Left cardiac atrium (tissue), 4 donors: ENCODE measurements at regions of chr2 and their contacts with region 1.

Region 1: GRCh38 chr2:71068218-71069035 is at the start of gene NAGK:
- DNase-seq: peak; percentile 96
- ATAC-seq: peak; percentile 96
- total RNA-seq, gene NAGK: 54.5 to 66.4 TPM

Region 2: DNA sequence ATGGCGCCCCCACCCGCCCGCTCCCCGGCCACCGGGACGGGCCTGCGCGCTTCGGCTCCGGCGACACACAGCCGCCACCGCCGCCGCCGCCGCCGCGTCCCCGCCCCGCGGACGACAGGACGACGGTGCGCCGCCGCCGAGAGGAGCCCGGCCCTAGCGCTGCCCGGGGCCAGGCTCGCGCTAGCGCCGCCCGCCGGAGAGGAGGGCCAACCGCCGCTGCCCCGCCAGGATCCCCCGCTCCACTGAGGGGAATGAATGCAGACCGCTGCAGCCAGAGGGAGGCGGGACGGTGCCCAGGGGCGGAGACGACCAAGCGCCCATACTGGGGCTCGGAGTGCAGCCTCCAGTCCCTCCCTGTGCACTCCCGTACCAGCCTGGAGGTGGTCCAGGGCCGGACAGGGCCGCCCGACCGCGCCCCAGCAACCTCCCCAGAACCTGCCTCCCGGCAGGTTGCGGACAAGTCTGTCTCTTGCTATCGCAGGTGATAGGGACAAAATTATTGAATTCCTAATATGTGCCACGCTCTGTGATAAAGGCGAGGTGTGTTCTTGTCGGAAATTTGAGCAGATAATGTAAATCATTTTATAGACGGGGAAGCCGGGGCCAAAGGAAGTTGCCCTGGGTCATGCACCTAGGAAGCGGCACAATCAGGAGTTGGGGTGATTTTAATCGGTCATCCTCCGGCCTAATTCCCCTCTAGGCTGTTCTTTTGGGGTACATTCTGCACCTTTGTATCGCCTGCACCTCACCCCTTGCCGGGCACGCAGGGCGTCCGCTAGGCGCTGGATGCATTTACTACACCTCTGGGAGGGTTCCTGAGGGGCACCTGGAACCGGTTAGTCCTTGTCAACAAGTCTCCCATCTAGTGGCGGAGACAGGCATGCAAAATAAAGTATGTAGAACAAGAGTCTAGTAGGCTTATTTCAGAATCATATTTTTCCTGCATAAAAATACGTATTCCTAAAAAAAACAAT is 73.4 kb before region 1 on chr2 and contains the start of gene TEX261:
- intact Hi-C with region 1: loop called in 1 of 2 experiments (anchors 5 kb)
- DNase-seq: peak; percentile 91
- ATAC-seq: peak; percentile 98 to 99
- total RNA-seq, gene TEX261: 54.8 to 60.4 TPM

Region 3: GRCh38 chr2:71130113-71130904 is 61.9 kb after region 1 on chr2 and contains the starts of genes MCEE and MPHOSPH10:
- intact Hi-C with region 1: loop called in 1 of 2 experiments (anchors 2 kb)
- DNase-seq: peak; percentile 94
- ATAC-seq: peak; percentile 97 to 98
- total RNA-seq, gene MCEE: 26.6 to 31.7 TPM
- total RNA-seq, gene MPHOSPH10: 18.3 to 29.6 TPM

Region 4: DNA sequence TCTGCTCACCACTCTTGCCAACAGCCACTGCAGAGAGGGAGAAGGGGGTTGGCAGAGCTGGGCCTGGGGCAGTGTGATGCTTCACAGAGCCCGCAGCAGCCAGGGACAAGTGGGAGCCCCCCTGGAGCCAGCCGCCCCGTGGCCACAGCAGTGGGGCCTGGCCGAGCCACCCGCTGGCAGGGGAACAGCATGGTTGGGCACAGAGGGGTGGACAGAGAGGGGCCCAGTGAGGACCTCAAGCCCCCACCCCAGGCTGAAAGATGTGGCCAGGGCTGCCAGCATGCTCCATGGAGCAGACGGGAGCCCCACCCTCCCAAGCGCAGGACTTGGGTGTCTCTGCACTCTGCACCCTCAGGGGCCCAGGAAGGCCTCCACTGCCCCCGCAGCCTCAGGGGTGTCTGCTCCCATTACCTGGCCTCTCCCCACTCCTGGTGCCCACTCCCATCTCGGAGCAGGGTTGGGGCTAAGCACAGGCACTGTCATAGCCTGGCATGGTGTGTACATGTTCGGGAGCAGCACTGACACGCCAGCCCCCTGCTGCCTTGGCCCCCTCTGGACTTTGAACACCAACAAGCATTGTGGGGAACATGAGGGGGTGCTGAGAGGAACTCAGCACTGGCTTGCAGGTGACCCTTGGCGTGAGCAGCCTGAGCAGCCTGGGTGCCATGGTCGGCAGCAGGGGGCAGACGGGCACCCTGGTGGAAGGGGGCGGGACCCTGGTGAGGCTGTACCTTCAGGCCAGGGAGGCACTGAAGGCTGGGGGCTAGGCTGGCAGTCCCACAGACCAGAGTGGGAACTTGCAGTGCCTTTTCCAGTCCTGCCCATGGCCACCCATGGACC is 1358.8 kb after region 1 on chr2:
- intact Hi-C with region 1: no loop called
- DNase-seq: no peak
- ATAC-seq: no peak